Heart right ventricle (tissue), 16 donors: ENCODE measurements at regions of chr6 and their contacts with region 1.

Region 1: DNA sequence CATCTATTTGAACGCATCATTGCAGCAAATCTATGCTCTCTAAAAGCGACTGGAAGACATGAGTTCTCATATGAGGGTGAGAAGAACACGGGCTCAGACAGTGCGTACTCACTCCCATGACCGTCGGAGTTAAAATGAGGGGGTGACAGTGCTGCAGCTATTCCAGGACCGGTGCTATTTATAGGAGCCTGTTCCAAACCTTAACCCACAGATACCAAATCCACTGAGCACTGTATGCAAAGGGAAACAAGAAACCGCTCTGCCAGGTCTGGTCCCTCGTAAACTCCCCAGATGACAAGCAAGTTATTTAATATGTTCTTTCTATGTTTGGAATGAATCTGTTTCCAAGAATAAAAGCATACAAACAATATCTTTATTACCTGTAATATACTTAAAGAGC is 22.9 kb downstream of the PPP1R3G start:
- DNase-seq: peak in 1 of 2 donors; percentile 57
- ATAC-seq: peak; percentile 69 to 95 (median 88)
- H3K4me3 ChIP-seq: peak overlapping the region in 2 of 10 donors; percentile 12 to 22
- H3K27ac ChIP-seq: peak overlapping the region in 9 of 10 donors; percentile 65 to 94 (median 80)
- H3K4me1 ChIP-seq: peaks cover 0 to 34% (median 12%) of the 10 kb centered on the region in 9 donors
- H3K27me3 ChIP-seq: no peaks in the 10 kb centered on the region
- CTCF ChIP-seq: no peak

Region 2: GRCh38 chr6:5085193-5085647 is 22.8 kb before region 1 on chr6 and contains the start of gene PPP1R3G:
- intact Hi-C with region 1: loop called in 1 of 10 experiments (anchors 2 kb)
- DNase-seq: peak; percentile 60 to 65
- ATAC-seq: peak; percentile 60 to 81 (median 70)
- H3K4me3 ChIP-seq: peak within 1 kb of the TSS; percentile 64 to 78 (median 68)
- H3K27ac ChIP-seq: peak within 1 kb of the TSS; percentile 82 to 95 (median 88)
- H3K4me1 ChIP-seq: peaks cover 7 to 43% (median 20%) of the 10 kb centered on the region in 9 donors
- H3K27me3 ChIP-seq: peaks cover 0 to 30% (median 0%) of the 10 kb centered on the region in 7 donors
- CTCF ChIP-seq: peak in 1 of 9 donors; percentile 18
- total RNA-seq, gene PPP1R3G: 6.3 to 12.2 (median 9.2) TPM

Region 3: GRCh38 chr6:5143634-5144311 is 35.7 kb after region 1 on chr6:
- intact Hi-C with region 1: no loop called
- DNase-seq: peak; percentile 87
- ATAC-seq: peak; percentile 57 to 91 (median 78)
- H3K4me3 ChIP-seq: no peak overlapping the region
- H3K27ac ChIP-seq: no peak overlapping the region
- H3K4me1 ChIP-seq: peaks cover 0 to 7% (median 0%) of the 10 kb centered on the region in 9 donors
- H3K27me3 ChIP-seq: no peaks in the 10 kb centered on the region
- CTCF ChIP-seq: peak; percentile 90 to 98 (median 94)